ENCODE measurements at regions of chr15 and their contacts with region 1.

Region 1: GRCh38 chr15:90037961-90038631 is 37.0 kb downstream of the ZNF710 start:
- DNase-seq: peak; percentile 85 to 96 (median 94)
- H3K4me3 ChIP-seq: no peak overlapping the region
- H3K27ac ChIP-seq: peak overlapping the region in 1 of 2 experiments; percentile 20
- H3K4me1 ChIP-seq: peaks cover 25 to 84% (median 66%) of the 10 kb centered on the region in 4 experiments
- H3K27me3 ChIP-seq: no peaks in the 10 kb centered on the region

Region 2: GRCh38 chr15:90009301-90010022 is 28.6 kb before region 1 on chr15:
- CTCF ChIA-PET with region 1: interaction called, 11 read pairs
- POLR2A ChIA-PET with region 1: interaction called, 4 read pairs
- DNase-seq: peak in 2 of 3 donors; percentile 15 to 40
- H3K4me3 ChIP-seq: no peak overlapping the region
- H3K27ac ChIP-seq: no peak overlapping the region
- H3K4me1 ChIP-seq: peaks cover 7 to 59% (median 15%) of the 10 kb centered on the region in 4 experiments
- H3K27me3 ChIP-seq: no peaks in the 10 kb centered on the region

Region 3: GRCh38 chr15:90051874-90052273 is 13.8 kb after region 1 on chr15:
- CTCF ChIA-PET with region 1: interaction called, 10 read pairs
- POLR2A ChIA-PET with region 1: interaction called, 6 read pairs
- DNase-seq: no peak
- H3K4me3 ChIP-seq: no peak overlapping the region
- H3K27ac ChIP-seq: no peak overlapping the region
- H3K4me1 ChIP-seq: peaks cover 0 to 68% (median 27%) of the 10 kb centered on the region in 4 experiments
- H3K27me3 ChIP-seq: no peaks in the 10 kb centered on the region

Region 4: DNA sequence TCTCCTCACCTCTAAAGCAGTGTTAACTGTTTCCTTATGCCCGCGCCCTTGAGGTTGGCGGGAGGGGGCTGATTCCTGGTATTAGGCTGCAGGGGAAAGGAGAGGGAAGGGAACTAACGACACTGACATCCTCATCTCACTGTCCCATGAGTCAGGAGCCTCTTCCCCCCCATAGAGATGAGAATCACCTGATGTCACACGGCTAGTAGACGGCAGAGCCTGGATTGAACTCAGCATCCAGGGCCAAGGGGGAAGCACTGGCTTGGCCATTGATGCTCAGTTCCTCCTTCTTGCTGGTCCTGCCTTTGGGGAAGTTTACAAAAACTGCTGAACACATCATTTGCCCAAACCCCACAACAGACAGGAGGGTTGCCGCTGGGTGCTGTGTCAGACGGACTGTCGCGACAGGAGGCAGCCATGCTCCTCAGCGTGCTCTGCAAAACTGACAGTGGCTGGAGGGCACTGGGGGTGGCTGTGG is 25.7 kb after region 1 on chr15:
- CTCF ChIA-PET with region 1: interaction called, 13 read pairs
- POLR2A ChIA-PET with region 1: interaction called, 5 read pairs
- DNase-seq: peak; percentile 51 to 83 (median 80)
- H3K4me3 ChIP-seq: no peak overlapping the region
- H3K27ac ChIP-seq: no peak overlapping the region
- H3K4me1 ChIP-seq: peaks cover 19 to 72% (median 46%) of the 10 kb centered on the region in 4 experiments
- H3K27me3 ChIP-seq: no peaks in the 10 kb centered on the region

Region 5: DNA sequence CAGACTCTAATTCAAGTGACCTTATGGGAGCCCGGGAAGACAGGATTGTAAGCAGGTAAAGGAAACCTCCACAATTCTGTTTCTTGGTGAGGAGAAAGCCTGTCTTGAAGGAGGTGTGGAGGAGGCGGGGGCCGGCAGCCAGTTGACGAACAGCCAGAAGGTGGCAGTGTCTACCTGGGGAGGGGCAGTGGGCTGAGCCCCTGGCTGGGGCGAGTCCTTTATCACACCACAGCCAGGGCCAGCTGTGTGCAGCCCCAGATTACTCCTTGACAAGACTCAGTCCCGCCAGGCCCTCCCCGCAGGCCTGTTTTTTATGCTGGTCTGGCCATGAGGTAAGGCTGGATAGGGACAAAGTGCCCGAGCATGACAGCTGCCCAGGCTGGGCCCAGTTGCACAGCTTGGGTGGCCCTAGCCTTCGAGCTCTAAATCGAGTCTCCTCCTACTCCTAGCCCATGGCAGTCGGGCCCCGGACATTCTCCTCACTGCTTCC is 105.1 kb after region 1 on chr15:
- CTCF ChIA-PET with region 1: no interaction called
- POLR2A ChIA-PET with region 1: no interaction called
- DNase-seq: peak; percentile 77 to 88 (median 83)
- H3K4me3 ChIP-seq: no peak overlapping the region
- H3K27ac ChIP-seq: peak overlapping the region in 1 of 2 experiments; percentile 70
- H3K4me1 ChIP-seq: peaks cover 0 to 14% (median 5%) of the 10 kb centered on the region in 4 experiments
- H3K27me3 ChIP-seq: no peaks in the 10 kb centered on the region